ENCODE measurements at regions of chr11 and their contacts with region 1.

Region 1: DNA sequence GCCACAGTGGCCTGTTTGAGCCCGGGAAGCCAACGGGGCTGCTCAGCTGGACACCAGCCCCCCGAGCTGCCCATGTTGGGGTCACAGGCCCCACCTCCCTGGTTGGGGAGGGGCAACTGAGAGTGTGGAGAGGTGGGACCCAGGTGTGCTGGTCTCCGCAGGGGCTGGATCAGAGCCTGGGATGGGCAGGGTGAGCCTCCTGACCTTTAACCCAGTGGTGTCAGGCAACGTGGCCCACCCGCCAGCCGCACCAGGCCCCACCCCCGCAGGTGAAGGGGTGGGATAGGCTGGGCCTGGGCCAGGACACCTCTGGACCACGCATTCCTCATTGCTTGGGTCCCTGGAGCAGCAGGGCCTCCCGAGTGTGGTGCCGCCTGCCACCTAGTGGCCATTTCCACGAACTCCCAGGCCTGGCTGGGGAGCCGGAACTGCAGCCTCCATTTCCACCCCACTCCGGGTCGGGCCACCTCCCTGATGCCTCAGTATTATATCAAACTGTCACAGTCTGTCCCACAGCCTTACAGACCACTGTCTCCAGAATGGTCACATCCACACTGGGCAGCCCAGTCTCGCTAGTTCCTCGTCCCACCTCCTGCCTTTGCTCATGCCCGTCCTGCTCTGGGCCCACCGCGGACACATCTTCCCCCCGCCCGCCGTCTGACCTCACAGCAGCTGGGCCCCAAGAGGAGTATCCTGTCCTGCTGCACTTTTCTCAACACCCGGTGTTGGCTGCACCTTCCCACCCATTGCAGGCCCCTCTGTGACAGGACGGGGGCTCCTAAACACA is 13.3 kb upstream of the PPP6R3 start:
- DNase-seq: peak; percentile 82 to 87 (median 84)
- ATAC-seq: peak; percentile 99
- H3K4me3 ChIP-seq: no peak overlapping the region
- H3K27ac ChIP-seq: no peak overlapping the region
- H3K4me1 ChIP-seq: peaks cover 0 to 19% of the 10 kb centered on the region in 2 experiments; a peak in 2 of 5 replicates
- H3K27me3 ChIP-seq: no peaks in the 10 kb centered on the region
- CTCF ChIP-seq: peak; percentile 85 to 92 (median 87)
- EP300 ChIP-seq: no peak
- POLR2A ChIP-seq: no peak
- RAD21 ChIP-seq: peak; percentile 54 to 79

Region 2: GRCh38 chr11:68213555-68214174 is 233.5 kb before region 1 on chr11:
- CTCF ChIA-PET with region 1: interaction called, 3 read pairs
- POLR2A ChIA-PET with region 1: no interaction called
- in situ Hi-C with region 1: no loop called
- intact Hi-C with region 1: loop called (anchors 5 kb)
- DNase-seq: peak; percentile 85 to 92 (median 87)
- ATAC-seq: peak; percentile 62
- H3K4me3 ChIP-seq: peak overlapping the region; percentile 82
- H3K27ac ChIP-seq: peak overlapping the region; percentile 97
- H3K4me1 ChIP-seq: peaks cover 10 to 36% of the 10 kb centered on the region in 2 experiments; a peak in 4 of 5 replicates
- H3K27me3 ChIP-seq: peaks cover 12 to 37% of the 10 kb centered on the region in 2 experiments; a peak in 4 of 5 replicates
- CTCF ChIP-seq: no peak
- EP300 ChIP-seq: no peak
- POLR2A ChIP-seq: peak; percentile 86
- RAD21 ChIP-seq: no peak

Region 3: GRCh38 chr11:68257475-68258362 is 189.5 kb before region 1 on chr11:
- CTCF ChIA-PET with region 1: interaction called, 8 read pairs
- POLR2A ChIA-PET with region 1: no interaction called
- in situ Hi-C with region 1: loop called (anchors 10 kb)
- intact Hi-C with region 1: loop called (anchors 5 kb)
- DNase-seq: peak; percentile 83 to 90 (median 84)
- ATAC-seq: peak; percentile 84
- H3K4me3 ChIP-seq: no peak overlapping the region
- H3K27ac ChIP-seq: no peak overlapping the region
- H3K4me1 ChIP-seq: peaks cover 9 to 15% of the 10 kb centered on the region in 2 experiments; a peak in 4 of 5 replicates
- H3K27me3 ChIP-seq: no peaks in the 10 kb centered on the region
- CTCF ChIP-seq: peak; percentile 85 to 90 (median 88)
- EP300 ChIP-seq: no peak
- POLR2A ChIP-seq: no peak
- RAD21 ChIP-seq: peak; percentile 97 to 98

Measured in K562 (cell line).